ENCODE measurements at regions of chr15 and their contacts with region 1.

Region 1: GRCh38 chr15:74134387-74135027 is 4.1 kb downstream of the ISLR2 start:
- DNase-seq: peak; percentile 41
- H3K4me3 ChIP-seq: no peak overlapping the region
- H3K27ac ChIP-seq: no peak overlapping the region
- H3K4me1 ChIP-seq: peaks cover 12% of the 10 kb centered on the region
- H3K27me3 ChIP-seq: peaks cover 71 to 76% of the 10 kb centered on the region in 2 experiments
- CTCF ChIP-seq: peak; percentile 48 to 74
- POLR2A ChIP-seq: no peak

Region 2: DNA sequence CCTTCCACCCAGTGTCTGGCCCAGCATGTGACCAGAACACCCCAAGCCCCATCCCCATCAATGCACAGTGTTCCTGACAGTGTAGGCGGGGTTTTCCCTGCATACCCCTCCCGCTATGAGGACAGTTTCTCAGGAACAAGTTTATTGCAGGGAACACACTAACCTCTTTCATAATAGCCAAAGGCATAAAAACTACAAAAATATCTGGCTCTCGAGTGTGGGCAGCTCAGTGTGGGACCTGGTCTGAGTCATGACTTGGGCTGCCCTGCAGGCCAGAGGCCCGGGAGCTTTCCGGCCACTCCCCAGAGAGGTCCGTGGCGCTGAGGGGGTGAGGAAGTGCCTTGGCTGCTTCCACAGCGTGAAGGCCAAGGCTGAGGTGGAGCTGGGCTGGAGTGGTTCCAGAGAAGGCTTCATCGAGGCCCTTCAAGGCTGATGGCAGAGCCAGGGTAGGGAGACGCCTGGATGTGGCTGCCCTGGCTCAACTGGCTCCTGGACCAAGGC is 44.9 kb after region 1 on chr15:
- CTCF ChIA-PET with region 1: no interaction called
- POLR2A ChIA-PET with region 1: no interaction called
- dilution Hi-C with region 1: no loop called
- intact Hi-C with region 1: loop called (anchors 2 kb)
- DNase-seq: peak; percentile 42
- H3K4me3 ChIP-seq: no peak overlapping the region
- H3K27ac ChIP-seq: peak overlapping the region; percentile 16
- H3K4me1 ChIP-seq: peaks cover 20% of the 10 kb centered on the region
- H3K27me3 ChIP-seq: no peaks in the 10 kb centered on the region
- CTCF ChIP-seq: no peak
- POLR2A ChIP-seq: no peak